ENCODE measurements at regions of chr18 and their contacts with region 1.

Region 1: DNA sequence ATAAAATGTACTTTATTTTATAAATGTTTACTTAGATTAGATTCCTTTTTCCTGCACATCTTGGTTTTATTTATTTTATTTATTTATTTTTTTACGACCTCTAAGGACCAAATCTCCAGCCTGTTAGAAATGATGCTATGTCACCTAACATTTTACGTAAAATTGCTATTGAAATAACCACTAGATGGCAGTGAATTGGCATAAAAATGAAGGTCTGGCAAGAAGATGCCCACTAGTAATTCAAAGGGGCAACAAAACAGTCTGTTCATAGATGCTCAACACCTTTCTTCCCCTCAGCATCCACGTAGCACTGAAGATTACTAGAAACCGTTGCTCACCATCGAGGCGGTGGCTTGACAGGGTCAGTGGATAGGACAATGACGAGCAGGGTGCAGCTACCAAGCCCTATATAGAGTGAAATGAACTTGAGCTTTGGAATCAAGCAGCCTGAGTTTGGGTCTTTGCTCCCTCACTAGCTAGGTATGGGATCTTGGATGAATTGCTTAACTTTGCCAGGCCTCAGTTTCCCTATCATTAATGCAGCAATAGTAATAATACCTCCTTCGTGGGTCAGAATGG is 128.7 kb upstream of the L3MBTL4 start:
- DNase-seq: peak; percentile 5 to 12
- ATAC-seq: no peak
- H3K4me3 ChIP-seq: no peak overlapping the region
- H3K27ac ChIP-seq: no peak overlapping the region
- H3K4me1 ChIP-seq: no peaks in the 10 kb centered on the region
- CTCF ChIP-seq: peak; percentile 48
- EP300 ChIP-seq: no peak
- POLR2A ChIP-seq: no peak
- RAD21 ChIP-seq: peak; percentile 43 to 53; a peak in 3 of 5 replicates

Region 2: GRCh38 chr18:6885992-6886796 is 342.8 kb after region 1 on chr18:
- CTCF ChIA-PET with region 1: interaction called, 39 read pairs
- POLR2A ChIA-PET with region 1: interaction called, 3 read pairs
- DNase-seq: peak; percentile 24 to 27
- ATAC-seq: peak; percentile 73 to 74; a peak in 3 of 6 replicates
- H3K4me3 ChIP-seq: no peak overlapping the region
- H3K27ac ChIP-seq: no peak overlapping the region
- H3K4me1 ChIP-seq: no peaks in the 10 kb centered on the region
- CTCF ChIP-seq: peak; percentile 65
- EP300 ChIP-seq: no peak
- POLR2A ChIP-seq: no peak
- RAD21 ChIP-seq: peak; percentile 68 to 79